ENCODE measurements at regions of chr3 and their contacts with region 1.

Region 1: DNA sequence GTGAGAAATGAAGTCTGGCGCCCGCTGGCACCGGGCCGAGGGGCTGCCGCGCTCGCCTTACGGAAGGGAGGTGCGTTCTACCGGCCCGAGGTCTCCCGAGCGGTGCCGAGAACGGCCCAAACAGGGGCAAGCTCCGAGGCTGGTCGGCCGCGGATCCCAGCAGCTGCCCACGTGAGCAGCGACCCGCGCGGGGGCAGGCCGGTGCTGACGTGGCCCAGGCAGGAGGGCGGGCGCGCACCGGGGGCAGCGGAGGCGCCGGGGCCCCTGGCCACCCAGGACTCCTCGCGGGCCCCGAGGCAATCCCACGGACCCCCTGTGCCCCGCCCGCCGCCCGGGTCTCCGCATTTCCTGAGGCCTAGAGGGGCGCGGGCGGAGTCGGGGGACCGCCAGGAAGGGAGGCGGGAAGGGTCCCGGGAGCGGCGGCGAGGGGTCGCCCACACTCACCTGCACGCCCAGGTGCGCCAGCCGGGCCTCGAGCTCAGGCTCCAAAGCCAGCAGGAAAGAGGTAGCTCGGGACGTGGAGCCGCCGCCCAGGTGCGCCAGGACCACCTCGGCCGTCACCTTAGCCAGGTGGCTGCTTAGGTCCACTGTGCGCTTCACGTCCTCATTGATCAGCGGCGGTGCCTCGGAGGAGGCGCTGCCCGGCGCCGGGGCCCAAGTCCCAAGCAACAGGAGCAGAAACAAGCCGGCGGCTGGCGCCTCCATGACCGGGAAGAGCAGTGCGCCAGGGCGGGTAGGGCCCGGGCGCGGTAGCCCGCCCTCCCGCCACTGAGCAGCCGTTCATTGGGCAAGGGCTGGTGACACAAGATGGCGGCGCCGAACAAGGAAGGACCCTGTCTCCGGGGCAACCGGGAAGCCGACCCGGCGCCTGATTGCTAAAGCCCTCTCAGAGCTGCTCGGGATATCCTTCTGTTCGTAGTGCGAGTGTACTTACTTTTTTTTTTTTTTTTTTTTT is at the start of gene RPN1:
- DNase-seq: peak; percentile 94
- H3K4me3 Mint-ChIP-seq: peak within 1 kb of the TSS; percentile 85
- H3K27ac Mint-ChIP-seq: peak within 1 kb of the TSS; percentile 89
- H3K4me1 Mint-ChIP-seq: peaks cover 25% of the 10 kb centered on the region
- H3K27me3 Mint-ChIP-seq: no peaks in the 10 kb centered on the region
- total RNA-seq, gene RPN1: 212 and 217 TPM in 2 replicates

Region 2: DNA sequence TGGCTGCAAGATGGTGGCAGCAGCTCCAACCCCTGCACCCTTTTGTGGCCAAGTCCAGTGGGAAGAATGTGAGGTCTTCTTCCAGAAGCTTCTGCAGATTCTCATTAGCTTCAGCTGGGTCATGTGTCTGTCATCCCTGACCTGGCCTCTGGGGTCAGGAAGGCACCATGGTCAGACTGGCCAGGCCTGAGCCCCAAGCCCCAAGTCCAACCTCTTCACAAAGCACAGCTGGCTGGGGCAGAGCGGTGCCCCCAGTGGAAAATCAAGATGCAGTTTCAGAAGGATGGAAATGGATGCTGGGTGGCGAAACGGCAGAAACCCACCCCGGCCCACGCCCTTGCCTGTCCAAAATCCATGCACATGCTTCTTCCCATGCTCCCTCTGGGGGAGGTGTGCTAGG is 141.5 kb before region 1 on chr3:
- intact Hi-C with region 1: no loop called
- DNase-seq: no peak
- H3K4me3 Mint-ChIP-seq: no peak overlapping the region
- H3K27ac Mint-ChIP-seq: no peak overlapping the region
- H3K4me1 Mint-ChIP-seq: no peaks in the 10 kb centered on the region
- H3K27me3 Mint-ChIP-seq: peaks cover 16% of the 10 kb centered on the region

Region 3: DNA sequence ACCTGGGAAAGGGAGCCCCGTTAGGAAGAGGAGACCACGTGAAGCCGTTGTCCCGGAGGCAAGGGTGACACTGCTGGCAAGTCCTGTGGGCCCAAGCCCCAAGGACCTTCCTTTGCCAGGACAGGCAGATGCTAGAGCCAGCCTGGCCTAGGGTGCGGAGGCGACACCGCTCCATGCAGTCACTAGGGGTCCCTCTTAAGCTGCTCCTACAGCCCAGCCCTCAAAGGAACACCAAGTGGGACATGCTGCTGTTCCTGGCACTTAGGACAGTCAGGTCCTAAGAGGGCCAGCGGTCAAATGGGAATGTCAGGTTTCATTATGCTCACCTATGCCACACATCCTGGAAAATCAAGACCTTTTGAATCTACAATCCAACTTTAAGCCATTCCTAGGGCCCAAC is 59.4 kb before region 1 on chr3:
- intact Hi-C with region 1: no loop called
- DNase-seq: no peak
- H3K4me3 Mint-ChIP-seq: no peak overlapping the region
- H3K27ac Mint-ChIP-seq: no peak overlapping the region
- H3K4me1 Mint-ChIP-seq: peaks cover 8% of the 10 kb centered on the region
- H3K27me3 Mint-ChIP-seq: peaks cover 4% of the 10 kb centered on the region

Region 4: GRCh38 chr3:128617557-128618397 is 32.6 kb before region 1 on chr3:
- intact Hi-C with region 1: loop called (anchors 1 kb)
- DNase-seq: peak; percentile 99
- H3K4me3 Mint-ChIP-seq: peak overlapping the region; percentile 86
- H3K27ac Mint-ChIP-seq: peak overlapping the region; percentile 84
- H3K4me1 Mint-ChIP-seq: peaks cover 31% of the 10 kb centered on the region
- H3K27me3 Mint-ChIP-seq: no peaks in the 10 kb centered on the region

Region 5: GRCh38 chr3:128725932-128726690 is 75.7 kb after region 1 on chr3 and contains the start of gene RAB7A:
- intact Hi-C with region 1: loop called (anchors 1 kb)
- DNase-seq: peak; percentile 94
- H3K4me3 Mint-ChIP-seq: peak within 1 kb of the TSS; percentile 90
- H3K27ac Mint-ChIP-seq: peak within 1 kb of the TSS; percentile 80
- H3K4me1 Mint-ChIP-seq: peaks cover 46% of the 10 kb centered on the region
- H3K27me3 Mint-ChIP-seq: peaks cover 3% of the 10 kb centered on the region
- total RNA-seq, gene RAB7A: 320 and 322 TPM in 2 replicates

Region 6: DNA sequence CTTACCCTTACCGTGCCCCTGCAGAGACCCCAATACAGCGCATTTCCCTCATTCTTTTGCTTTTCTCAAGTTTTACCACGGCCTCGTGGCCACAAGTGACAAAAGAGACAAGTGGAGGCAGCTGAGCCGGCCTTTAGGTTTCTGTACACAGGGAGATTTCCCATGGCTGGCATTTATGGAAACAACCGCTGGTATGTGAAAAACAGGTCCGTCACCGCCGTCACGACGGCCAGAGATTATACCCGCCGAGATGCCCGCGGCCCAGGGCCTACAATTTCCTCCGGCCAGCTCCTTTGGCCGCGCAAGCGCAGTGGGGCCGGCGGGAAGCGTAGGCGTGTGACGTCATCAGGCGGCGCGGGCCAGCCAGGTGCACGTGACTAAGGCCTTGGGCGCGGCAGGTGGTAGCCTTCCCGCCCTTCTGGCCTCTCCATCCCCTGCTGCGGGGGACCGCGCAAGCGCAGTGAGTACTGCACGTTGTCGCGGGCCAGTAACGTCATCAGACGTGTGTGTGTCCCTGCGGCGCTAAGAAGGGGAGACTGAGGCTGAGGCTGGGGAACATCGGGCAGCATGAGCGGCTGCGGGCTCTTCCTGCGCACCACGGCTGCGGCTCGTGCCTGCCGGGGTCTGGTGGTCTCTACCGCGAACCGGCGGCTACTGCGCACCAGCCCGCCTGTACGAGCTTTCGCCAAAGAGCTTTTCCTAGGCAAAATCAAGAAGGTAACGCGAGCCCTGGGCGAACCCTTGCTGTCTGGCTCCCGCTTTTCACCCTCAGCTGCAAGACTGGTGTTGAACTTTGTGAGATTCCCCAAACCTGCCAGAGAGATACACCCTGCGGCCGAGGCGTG is 229.0 kb after region 1 on chr3 and contains the start of gene ACAD9:
- intact Hi-C with region 1: loop called (anchors 1 kb)
- DNase-seq: peak; percentile 98
- H3K4me3 Mint-ChIP-seq: peak within 1 kb of the TSS; percentile 93
- H3K27ac Mint-ChIP-seq: peak within 1 kb of the TSS; percentile 95
- H3K4me1 Mint-ChIP-seq: peaks cover 51% of the 10 kb centered on the region
- H3K27me3 Mint-ChIP-seq: no peaks in the 10 kb centered on the region
- total RNA-seq, gene ACAD9: 60.8 and 68.9 TPM in 2 replicates

Region 7: GRCh38 chr3:129399145-129399894 is 748.9 kb after region 1 on chr3:
- intact Hi-C with region 1: loop called (anchors 2 kb)
- DNase-seq: peak; percentile 68
- H3K4me3 Mint-ChIP-seq: peak overlapping the region; percentile 100
- H3K27ac Mint-ChIP-seq: peak overlapping the region; percentile 98
- H3K4me1 Mint-ChIP-seq: peaks cover 27% of the 10 kb centered on the region
- H3K27me3 Mint-ChIP-seq: no peaks in the 10 kb centered on the region

Measured in activated T-helper 2 cell treated with anti-CD3 and anti-CD28 coated beads, Interferon-gamma antibody, Interleukin-2, Interleukin-4, amounts not matched to agents 10 μg/mL and 5 μg/mL and 100 μg/mL, durations not matched to agents 14 hours and 24 hours and 36 hours (primary cell).